Natural killer cell (primary cell): ENCODE measurements at regions of chr3 and their contacts with region 1.

Region 1: GRCh38 chr3:28252001-28252431 is 10.6 kb downstream of the CMC1 start:
- DNase-seq: peak in 1 of 2 donors; percentile 74
- ATAC-seq: peak; percentile 87 to 94 (median 93)
- H3K4me3 ChIP-seq: no peak overlapping the region
- H3K4me3 Mint-ChIP-seq: peak overlapping the region; percentile 80
- H3K27ac ChIP-seq: peak overlapping the region; percentile 63
- H3K27ac Mint-ChIP-seq: peak overlapping the region; percentile 75 to 89
- H3K4me1 ChIP-seq: peaks cover 29% of the 10 kb centered on the region
- H3K4me1 Mint-ChIP-seq: peaks cover 57 to 60% of the 10 kb centered on the region in 2 donors
- H3K27me3 ChIP-seq: no peaks in the 10 kb centered on the region
- H3K27me3 Mint-ChIP-seq: no peaks in the 10 kb centered on the region
- CTCF ChIP-seq: no peak

Region 2: GRCh38 chr3:28295898-28296490 is 44.0 kb after region 1 on chr3:
- intact Hi-C with region 1: loop called (anchors 2 kb)
- DNase-seq: peak in 1 of 2 donors; percentile 19
- ATAC-seq: peak; percentile 28 to 31 (median 29)
- H3K4me3 ChIP-seq: peak overlapping the region; percentile 72
- H3K4me3 Mint-ChIP-seq: peak overlapping the region; percentile 92
- H3K27ac ChIP-seq: peak overlapping the region; percentile 94
- H3K27ac Mint-ChIP-seq: peak overlapping the region; percentile 94 to 95
- H3K4me1 ChIP-seq: peaks cover 9% of the 10 kb centered on the region
- H3K4me1 Mint-ChIP-seq: peaks cover 61 to 72% of the 10 kb centered on the region in 2 donors
- H3K27me3 ChIP-seq: no peaks in the 10 kb centered on the region
- H3K27me3 Mint-ChIP-seq: no peaks in the 10 kb centered on the region
- CTCF ChIP-seq: no peak